ENCODE measurements at regions of chr11 and their contacts with region 1.

Region 1: DNA sequence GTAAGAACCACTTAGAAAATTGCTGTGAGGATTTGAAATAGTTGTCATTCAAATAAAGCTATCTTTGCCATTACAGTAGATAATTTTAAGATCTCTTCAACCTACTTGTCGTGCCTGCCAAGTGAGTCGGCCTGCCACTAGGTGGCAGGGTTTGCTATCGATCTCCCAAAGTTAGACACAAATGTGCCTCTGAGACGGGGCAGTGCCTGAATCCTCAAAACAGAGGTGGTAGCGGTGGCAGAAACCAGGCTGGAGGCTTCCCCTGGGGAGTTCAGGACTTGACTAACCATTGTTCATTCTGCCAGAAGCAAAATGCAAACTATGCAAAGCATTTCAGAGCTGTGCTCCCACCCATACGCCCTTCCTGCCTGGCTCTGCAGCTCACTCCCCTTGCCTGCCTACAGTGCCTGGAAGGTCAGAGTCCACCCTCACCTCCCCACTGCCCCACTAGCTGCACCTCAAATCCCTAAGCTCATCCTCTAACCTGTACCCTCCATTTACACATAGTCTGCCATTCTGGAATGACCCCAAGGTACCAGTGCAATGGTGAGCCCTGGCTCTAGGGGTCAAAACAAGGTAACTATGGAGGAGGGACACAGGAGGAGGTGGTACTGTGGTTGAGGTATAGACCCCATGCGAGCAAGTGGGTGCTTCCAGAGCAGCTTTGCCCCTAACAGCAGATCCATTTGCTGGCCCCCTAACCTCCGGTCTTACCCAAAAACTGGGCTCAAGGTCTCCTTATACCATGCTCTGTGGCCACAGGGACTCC is 82.1 kb downstream of the C11orf58 start:
- DNase-seq: peak; percentile 74
- H3K4me3 ChIP-seq: no peak overlapping the region
- H3K27ac ChIP-seq: no peak overlapping the region
- H3K4me1 ChIP-seq: no peaks in the 10 kb centered on the region
- H3K27me3 ChIP-seq: no peaks in the 10 kb centered on the region
- CTCF ChIP-seq: peak; percentile 77 to 93
- POLR2A ChIP-seq: no peak

Region 2: DNA sequence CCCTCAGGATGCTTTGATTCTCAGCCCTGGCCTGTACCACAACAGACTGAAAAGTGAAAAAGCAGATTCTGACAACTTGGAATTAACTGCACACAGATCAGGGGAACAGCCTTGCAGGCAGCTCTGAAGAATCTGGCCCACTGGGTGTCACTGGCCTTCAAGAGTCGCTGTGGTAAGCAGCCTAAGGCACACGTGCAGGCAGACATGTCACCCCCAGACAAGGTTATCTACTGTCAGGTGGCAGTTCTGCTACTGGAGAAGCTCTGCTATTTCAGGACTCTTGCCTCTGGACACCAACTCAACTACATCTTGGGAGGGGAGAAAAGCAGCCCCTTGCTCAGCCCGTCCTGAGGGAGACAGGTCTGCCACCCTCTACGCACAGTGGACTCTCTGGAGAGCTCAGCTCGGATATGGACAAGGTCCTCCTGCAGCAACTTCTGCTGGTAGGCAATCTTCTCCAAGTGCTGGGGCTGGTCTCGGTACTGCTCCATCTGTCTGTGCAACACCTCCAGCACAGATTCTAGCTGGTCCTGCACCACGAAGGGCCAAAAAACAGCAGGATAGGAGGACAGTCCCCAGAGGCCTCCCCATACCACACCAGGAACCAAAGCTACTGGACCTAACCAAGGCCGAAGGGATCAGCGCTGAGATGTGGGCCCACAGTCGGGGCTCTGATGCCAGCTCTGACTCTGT is 19.1 kb before region 1 on chr11:
- CTCF ChIA-PET with region 1: interaction called, 17 read pairs
- POLR2A ChIA-PET with region 1: no interaction called
- dilution Hi-C with region 1: no loop called
- intact Hi-C with region 1: no loop called
- DNase-seq: no peak
- H3K4me3 ChIP-seq: no peak overlapping the region
- H3K27ac ChIP-seq: no peak overlapping the region
- H3K4me1 ChIP-seq: peaks cover 6% of the 10 kb centered on the region
- H3K27me3 ChIP-seq: no peaks in the 10 kb centered on the region
- CTCF ChIP-seq: no peak
- POLR2A ChIP-seq: no peak

Region 3: DNA sequence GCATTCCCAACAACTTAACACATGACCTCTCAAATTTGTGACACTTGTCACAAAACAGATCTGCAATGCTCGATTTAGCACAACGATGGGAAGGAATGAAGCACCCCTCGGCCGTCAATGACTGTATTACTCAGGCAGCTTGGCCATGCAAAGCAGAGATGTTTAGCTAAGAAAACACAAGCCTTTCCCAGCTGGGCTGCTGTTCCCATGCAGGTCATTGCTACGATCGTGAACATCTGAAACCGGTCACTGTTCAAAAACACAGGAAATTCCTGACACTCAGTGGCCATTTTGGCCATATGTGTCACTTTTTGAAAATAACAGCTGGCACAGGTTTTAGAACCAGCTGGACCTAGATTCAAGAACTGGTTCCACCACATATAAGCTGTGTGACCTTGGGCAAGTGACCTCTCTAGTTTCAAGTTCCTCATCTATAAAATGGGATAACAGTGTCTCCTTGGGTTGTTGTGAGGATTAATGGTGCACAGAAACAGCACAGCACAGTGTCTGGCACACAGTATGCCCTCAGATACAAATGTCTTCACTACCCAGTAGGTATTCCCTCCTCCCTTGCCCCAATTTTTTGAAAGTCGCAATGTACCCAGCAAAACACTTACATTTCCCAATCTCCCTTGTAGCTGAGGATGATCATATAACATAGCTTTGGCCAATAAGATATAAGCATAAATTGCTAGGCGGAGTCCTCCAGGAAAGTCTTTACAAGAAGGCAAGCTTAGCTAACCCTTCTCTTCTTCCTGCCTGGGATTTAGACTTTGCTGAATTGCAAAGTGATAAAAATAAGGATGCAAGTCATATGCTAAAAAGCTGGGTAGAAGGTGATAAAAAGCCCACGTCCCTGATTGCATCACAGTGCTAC is 11.0 kb after region 1 on chr11:
- CTCF ChIA-PET with region 1: interaction called, 68 read pairs
- POLR2A ChIA-PET with region 1: interaction called, 4 read pairs
- dilution Hi-C with region 1: no loop called
- intact Hi-C with region 1: no loop called
- DNase-seq: no peak
- H3K4me3 ChIP-seq: no peak overlapping the region
- H3K27ac ChIP-seq: no peak overlapping the region
- H3K4me1 ChIP-seq: no peaks in the 10 kb centered on the region
- H3K27me3 ChIP-seq: no peaks in the 10 kb centered on the region
- CTCF ChIP-seq: no peak
- POLR2A ChIP-seq: no peak

Region 4: DNA sequence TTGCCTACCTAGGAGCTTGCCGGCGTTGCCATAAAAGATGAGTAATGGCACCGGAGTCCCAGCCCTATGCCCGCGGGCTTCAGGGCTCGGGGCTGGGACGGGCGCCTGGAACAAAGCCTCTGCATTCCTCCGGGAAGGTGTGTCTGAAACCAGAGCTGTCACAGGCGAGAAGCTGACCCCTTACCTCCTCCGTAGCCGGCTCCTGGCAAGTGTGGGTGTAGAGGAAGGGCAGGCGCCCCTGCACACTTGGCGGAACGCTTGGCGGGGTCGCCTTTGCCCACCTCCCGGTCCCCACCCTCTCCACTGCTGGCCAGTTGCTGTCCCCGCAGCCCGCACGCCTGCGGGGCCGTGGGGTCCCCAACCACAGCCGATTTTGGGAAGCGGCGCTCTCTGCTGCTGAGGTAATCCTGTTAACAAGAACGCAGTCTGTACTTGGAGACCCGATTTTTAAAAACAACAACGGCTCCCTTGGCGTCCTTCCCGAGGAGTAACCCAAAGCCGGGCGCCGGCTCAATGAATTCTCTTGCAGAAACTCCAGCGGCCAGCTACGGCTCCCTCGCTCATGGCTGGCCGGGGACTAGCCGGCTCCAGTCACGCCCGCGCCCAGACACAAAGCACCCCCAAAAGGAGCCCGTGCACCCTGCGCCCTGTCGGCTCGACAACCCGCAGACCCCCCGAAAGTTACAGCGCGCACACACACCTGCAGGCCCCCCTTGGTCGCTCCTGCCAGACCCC is 104.5 kb after region 1 on chr11:
- CTCF ChIA-PET with region 1: interaction called, 13 read pairs
- POLR2A ChIA-PET with region 1: no interaction called
- dilution Hi-C with region 1: no loop called
- intact Hi-C with region 1: no loop called
- DNase-seq: no peak
- H3K4me3 ChIP-seq: peak overlapping the region in 2 of 3 experiments; percentile 18 to 29
- H3K27ac ChIP-seq: no peak overlapping the region
- H3K4me1 ChIP-seq: peaks cover 5% of the 10 kb centered on the region
- H3K27me3 ChIP-seq: peaks cover 30 to 41% of the 10 kb centered on the region in 2 experiments
- CTCF ChIP-seq: no peak
- POLR2A ChIP-seq: no peak

Region 5: GRCh38 chr11:16945671-16946469 is 125.4 kb after region 1 on chr11:
- CTCF ChIA-PET with region 1: interaction called, 15 read pairs
- POLR2A ChIA-PET with region 1: no interaction called
- dilution Hi-C with region 1: no loop called
- intact Hi-C with region 1: no loop called
- DNase-seq: peak; percentile 34
- H3K4me3 ChIP-seq: no peak overlapping the region
- H3K27ac ChIP-seq: no peak overlapping the region
- H3K4me1 ChIP-seq: no peaks in the 10 kb centered on the region
- H3K27me3 ChIP-seq: no peaks in the 10 kb centered on the region
- CTCF ChIP-seq: peak; percentile 53 to 67
- POLR2A ChIP-seq: no peak

Region 6: GRCh38 chr11:16981651-16982194 is 161.2 kb after region 1 on chr11:
- CTCF ChIA-PET with region 1: no interaction called
- POLR2A ChIA-PET with region 1: no interaction called
- dilution Hi-C with region 1: no loop called
- intact Hi-C with region 1: no loop called
- DNase-seq: no peak
- H3K4me3 ChIP-seq: no peak overlapping the region
- H3K27ac ChIP-seq: no peak overlapping the region
- H3K4me1 ChIP-seq: no peaks in the 10 kb centered on the region
- H3K27me3 ChIP-seq: no peaks in the 10 kb centered on the region
- CTCF ChIP-seq: no peak
- POLR2A ChIP-seq: no peak

Region 7: DNA sequence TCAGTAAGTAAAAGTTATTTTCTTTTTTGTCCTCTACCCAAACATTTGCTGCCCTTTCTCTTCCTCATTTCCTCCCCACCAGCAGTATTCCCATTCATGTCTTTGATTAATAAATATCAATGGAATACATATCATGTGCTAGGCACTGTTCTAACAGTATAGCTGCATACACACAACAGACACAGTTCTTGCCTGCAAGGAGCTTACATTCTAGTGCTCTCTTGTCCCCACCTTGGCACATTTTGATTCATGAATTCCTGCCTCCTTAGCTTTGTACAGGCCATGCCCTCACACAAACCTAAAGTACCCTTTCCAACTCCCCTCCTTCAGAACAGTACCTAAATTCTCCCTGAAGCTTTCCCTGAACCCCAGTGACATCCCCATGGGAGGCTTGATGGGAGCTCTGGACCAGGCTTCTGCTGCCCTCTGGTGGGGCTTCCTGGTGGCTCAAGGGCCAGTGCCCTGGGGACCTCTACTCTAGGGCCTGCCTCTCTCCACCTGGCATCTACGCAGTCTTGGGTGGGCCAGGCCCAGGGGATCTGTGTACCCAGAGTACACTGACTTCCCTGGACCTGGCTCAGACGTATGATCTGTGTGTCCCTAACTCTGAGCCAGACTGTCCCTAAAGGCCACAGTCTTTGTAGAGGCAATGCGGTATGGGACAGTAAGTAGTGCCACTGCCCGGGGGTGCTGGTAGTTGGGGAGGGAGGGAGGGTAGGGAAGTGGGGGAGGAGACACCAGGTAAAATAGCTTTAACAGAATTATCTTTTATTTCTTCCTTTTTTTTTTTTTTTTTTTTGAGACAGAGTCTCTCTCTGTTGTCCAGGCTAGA is 242.9 kb after region 1 on chr11:
- CTCF ChIA-PET with region 1: interaction called, 135 read pairs
- POLR2A ChIA-PET with region 1: interaction called, 8 read pairs
- dilution Hi-C with region 1: no loop called
- intact Hi-C with region 1: loop called (anchors 1 kb)
- DNase-seq: peak; percentile 46
- H3K4me3 ChIP-seq: no peak overlapping the region
- H3K27ac ChIP-seq: no peak overlapping the region
- H3K4me1 ChIP-seq: no peaks in the 10 kb centered on the region
- H3K27me3 ChIP-seq: no peaks in the 10 kb centered on the region
- CTCF ChIP-seq: peak; percentile 76 to 85
- POLR2A ChIP-seq: no peak

Measured in endothelial cell of umbilical vein (primary cell).